IMR-90 (cell line): ENCODE measurements at regions of chr19 and their contacts with region 1.

Region 1: DNA sequence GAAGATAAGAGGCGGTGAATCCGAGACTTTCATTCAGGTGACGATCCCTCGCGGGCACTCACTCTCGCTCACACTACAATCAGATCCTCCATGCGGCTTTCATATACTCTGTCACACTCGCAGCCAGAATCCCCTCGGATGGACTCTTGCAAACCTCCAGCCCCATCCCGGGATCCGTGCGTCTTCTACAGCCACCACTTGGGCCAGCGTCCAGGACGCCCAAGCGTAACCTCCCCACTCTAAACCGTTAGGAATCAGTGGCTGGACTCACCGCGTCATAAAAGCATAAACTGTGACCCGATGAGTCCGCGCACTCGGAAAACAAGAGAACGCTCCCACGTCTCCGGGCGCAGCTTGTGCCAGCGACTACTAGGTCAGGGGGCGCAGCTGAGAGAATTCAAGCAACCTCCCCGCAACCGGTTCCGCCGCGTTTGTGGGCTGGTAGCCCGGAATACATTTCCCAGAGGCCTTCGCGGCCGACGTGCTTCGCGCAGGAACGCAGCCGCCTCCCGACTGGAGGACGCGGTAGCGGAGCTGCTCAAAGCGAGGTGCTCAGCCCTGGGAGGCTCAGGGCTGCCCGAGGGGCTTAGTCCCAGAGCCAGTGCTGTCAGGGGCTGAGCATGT is 27.6 kb downstream of the ZNF607 start:
- DNase-seq: peak; percentile 80
- ATAC-seq: peak; percentile 98
- H3K4me3 ChIP-seq: peak overlapping the region; percentile 75
- H3K27ac ChIP-seq: peak overlapping the region; percentile 49
- H3K4me1 ChIP-seq: no peaks in the 10 kb centered on the region; the same call in 1 of the 2 replicates
- H3K27me3 ChIP-seq: no peaks in the 10 kb centered on the region
- CTCF ChIP-seq: peak; percentile 6; the same call in 1 of the 2 replicates
- POLR2A ChIP-seq: 0 out of 2 replicates have a peak, but pooled peaks have one; percentile 39
- RAD21 ChIP-seq: no peak

Region 2: GRCh38 chr19:37655689-37656371 is 36.2 kb before region 1 on chr19:
- CTCF ChIA-PET with region 1: no interaction called
- POLR2A ChIA-PET with region 1: no interaction called
- dilution Hi-C with region 1: no loop called
- in situ Hi-C with region 1: no loop called
- intact Hi-C with region 1: loop called (anchors 2 kb)
- DNase-seq: peak; percentile 68
- ATAC-seq: peak; percentile 78
- H3K4me3 ChIP-seq: peak overlapping the region; percentile 89
- H3K27ac ChIP-seq: peak overlapping the region; percentile 71
- H3K4me1 ChIP-seq: no peaks in the 10 kb centered on the region
- H3K27me3 ChIP-seq: no peaks in the 10 kb centered on the region
- CTCF ChIP-seq: no peak; the same call in 1 of the 2 replicates
- POLR2A ChIP-seq: no peak; the same call in 1 of the 2 replicates
- RAD21 ChIP-seq: no peak